Activated CD4-positive, alpha-beta memory T cell treated with anti-CD3 and anti-CD28 coated beads for 36 hours (primary cell): ENCODE measurements at regions of chr3 and their contacts with region 1.

Region 1: GRCh38 chr3:191244242-191244867 is 45.3 kb downstream of the OSTN start:
- DNase-seq: no peak
- H3K4me3 Mint-ChIP-seq: no peak overlapping the region
- H3K27ac Mint-ChIP-seq: no peak overlapping the region
- H3K4me1 Mint-ChIP-seq: peaks cover 2% of the 10 kb centered on the region
- H3K27me3 Mint-ChIP-seq: no peaks in the 10 kb centered on the region

Region 2: GRCh38 chr3:191328962-191329653 is 84.8 kb after region 1 on chr3 and contains the start of gene CCDC50:
- CTCF ChIA-PET with region 1: no interaction called
- POLR2A ChIA-PET with region 1: no interaction called
- intact Hi-C with region 1: loop called (anchors 5 kb)
- DNase-seq: peak; percentile 62
- H3K4me3 Mint-ChIP-seq: peak within 1 kb of the TSS; percentile 71
- H3K27ac Mint-ChIP-seq: peak within 1 kb of the TSS; percentile 21
- H3K4me1 Mint-ChIP-seq: peaks cover 7% of the 10 kb centered on the region
- H3K27me3 Mint-ChIP-seq: peaks cover 15% of the 10 kb centered on the region
- total RNA-seq, gene CCDC50: 13.6 to 15.4 TPM